ENCODE measurements at regions of chr11 and their contacts with region 1.

Region 1: DNA sequence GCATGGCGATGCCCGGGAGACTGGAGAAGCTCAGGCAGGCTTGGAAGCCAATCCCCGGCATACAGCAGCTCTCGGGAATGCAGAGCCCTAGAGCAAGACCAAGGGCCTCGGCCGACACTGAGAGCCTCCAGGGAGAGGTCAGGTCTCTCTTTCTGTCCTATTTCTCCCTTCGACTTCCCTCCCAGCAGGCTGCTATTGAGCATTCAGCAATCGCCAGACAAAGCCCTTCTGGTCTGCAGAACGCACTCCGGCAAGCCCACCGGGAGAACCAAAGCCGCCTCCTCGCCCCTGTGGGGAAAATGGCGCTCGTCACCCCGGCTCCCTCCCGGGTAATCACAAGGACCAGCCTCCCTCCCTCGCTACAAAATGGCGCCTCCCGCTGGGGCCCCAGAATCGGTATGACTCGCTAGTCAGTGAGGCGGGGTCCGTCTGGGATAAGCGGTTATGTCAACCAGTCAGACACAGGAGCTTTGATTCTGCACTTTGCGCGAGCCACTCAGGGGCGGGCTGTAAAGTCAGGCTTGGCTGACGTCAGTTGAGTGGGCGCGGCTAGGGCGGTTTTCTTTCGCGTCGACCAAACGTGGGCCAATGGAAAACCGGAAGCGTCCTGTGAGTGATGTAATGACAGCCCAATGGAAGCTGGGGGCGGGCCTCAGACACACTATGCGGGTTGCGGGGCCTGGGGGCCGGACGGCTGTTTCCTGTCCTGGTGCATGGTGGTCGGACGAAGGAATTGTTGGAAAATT is at the start of gene ZNF143:
- DNase-seq: peak; percentile 100
- H3K4me3 Mint-ChIP-seq: peak within 1 kb of the TSS; percentile 97
- H3K27ac Mint-ChIP-seq: peak within 1 kb of the TSS; percentile 98
- H3K4me1 Mint-ChIP-seq: peaks cover 23% of the 10 kb centered on the region
- H3K27me3 Mint-ChIP-seq: no peaks in the 10 kb centered on the region
- total RNA-seq, gene ZNF143: 38.6 and 39.2 TPM in 2 replicates

Region 2: GRCh38 chr11:8964324-8965320 is 495.9 kb before region 1 on chr11 and contains the start of gene TMEM9B:
- intact Hi-C with region 1: loop called (anchors 5 kb)
- DNase-seq: peak; percentile 95
- H3K4me3 Mint-ChIP-seq: peak within 1 kb of the TSS; percentile 100
- H3K27ac Mint-ChIP-seq: peak within 1 kb of the TSS; percentile 95
- H3K4me1 Mint-ChIP-seq: peaks cover 30% of the 10 kb centered on the region
- H3K27me3 Mint-ChIP-seq: no peaks in the 10 kb centered on the region
- total RNA-seq, gene TMEM9B: 25.2 and 26.5 TPM in 2 replicates

Region 3: DNA sequence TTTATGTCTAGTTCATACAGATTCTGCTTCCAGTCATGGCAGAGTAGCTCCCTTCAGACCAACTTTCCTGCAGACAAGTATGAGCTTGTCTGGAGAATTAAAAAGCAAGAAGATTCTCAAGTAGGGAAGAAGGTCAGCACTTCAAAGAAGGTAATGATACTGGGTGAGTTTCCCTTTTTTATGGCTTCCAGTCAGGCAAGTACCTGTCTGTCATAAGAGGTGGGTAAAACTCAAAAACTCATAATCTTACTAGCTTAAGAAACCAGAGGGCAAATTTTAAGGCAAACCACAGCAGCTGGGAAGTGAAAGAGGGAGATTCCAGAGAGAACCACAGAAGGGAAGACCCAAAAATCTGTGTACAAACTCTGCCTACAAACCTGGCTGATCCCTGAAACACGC is 249.6 kb before region 1 on chr11:
- intact Hi-C with region 1: loop called (anchors 5 kb)
- DNase-seq: peak; percentile 63
- H3K4me3 Mint-ChIP-seq: peak overlapping the region; percentile 53
- H3K27ac Mint-ChIP-seq: peak overlapping the region; percentile 76
- H3K4me1 Mint-ChIP-seq: peaks cover 54% of the 10 kb centered on the region
- H3K27me3 Mint-ChIP-seq: no peaks in the 10 kb centered on the region

Region 4: GRCh38 chr11:9384535-9385303 is 75.8 kb before region 1 on chr11 and contains the start of gene IPO7:
- intact Hi-C with region 1: loop called (anchors 1 kb)
- DNase-seq: peak; percentile 97
- H3K4me3 Mint-ChIP-seq: peak within 1 kb of the TSS; percentile 95
- H3K27ac Mint-ChIP-seq: peak within 1 kb of the TSS; percentile 94
- H3K4me1 Mint-ChIP-seq: peaks cover 21% of the 10 kb centered on the region
- H3K27me3 Mint-ChIP-seq: no peaks in the 10 kb centered on the region
- total RNA-seq, gene IPO7: 177 and 200 TPM in 2 replicates

Region 5: GRCh38 chr11:9479899-9480298 is 19.4 kb after region 1 on chr11:
- intact Hi-C with region 1: no loop called
- DNase-seq: no peak
- H3K4me3 Mint-ChIP-seq: no peak overlapping the region
- H3K27ac Mint-ChIP-seq: no peak overlapping the region
- H3K4me1 Mint-ChIP-seq: no peaks in the 10 kb centered on the region
- H3K27me3 Mint-ChIP-seq: no peaks in the 10 kb centered on the region

Region 6: GRCh38 chr11:9565822-9566560 is 105.5 kb after region 1 on chr11:
- intact Hi-C with region 1: loop called (anchors 2 kb)
- DNase-seq: peak; percentile 88
- H3K4me3 Mint-ChIP-seq: peak overlapping the region; percentile 52
- H3K27ac Mint-ChIP-seq: peak overlapping the region; percentile 85
- H3K4me1 Mint-ChIP-seq: peaks cover 20% of the 10 kb centered on the region
- H3K27me3 Mint-ChIP-seq: peaks cover 2% of the 10 kb centered on the region

Region 7: DNA sequence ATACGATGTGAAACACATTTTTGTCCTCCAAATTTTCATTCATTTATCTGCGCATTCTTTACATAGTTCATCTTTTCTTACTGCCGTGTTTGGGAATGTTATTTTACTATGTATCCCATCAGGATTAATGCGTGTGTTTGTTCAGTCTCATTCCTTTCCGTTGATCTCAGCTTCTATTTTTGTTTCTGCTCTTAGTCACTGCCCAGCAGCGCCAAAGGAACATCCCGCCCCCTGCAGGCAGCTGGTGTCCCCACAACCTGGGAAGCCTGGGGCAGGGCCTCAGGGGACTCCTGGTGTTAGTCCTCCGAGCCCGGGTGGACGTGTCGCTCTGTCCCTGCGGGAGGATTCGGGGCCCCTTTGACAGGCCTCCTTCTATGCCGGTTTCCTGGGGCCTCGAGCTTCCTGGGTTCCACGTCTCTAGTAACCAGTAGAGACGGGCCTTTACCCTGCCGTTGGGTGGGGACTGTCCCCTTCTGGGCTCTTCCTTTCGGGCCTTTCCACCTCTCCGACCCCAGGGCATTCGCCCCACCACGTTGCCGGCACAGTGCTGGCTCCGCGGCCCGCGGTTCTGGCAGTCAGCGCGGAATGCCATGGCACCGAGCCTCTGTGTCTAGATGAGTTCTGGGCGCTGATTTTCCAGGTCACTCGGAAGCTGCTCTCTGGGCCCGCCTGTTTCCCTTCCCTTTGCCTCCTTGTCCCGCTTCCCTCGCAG is 152.8 kb after region 1 on chr11:
- intact Hi-C with region 1: loop called (anchors 2 kb)
- DNase-seq: peak; percentile 96
- H3K4me3 Mint-ChIP-seq: peak overlapping the region; percentile 90
- H3K27ac Mint-ChIP-seq: peak overlapping the region; percentile 98
- H3K4me1 Mint-ChIP-seq: peaks cover 35% of the 10 kb centered on the region
- H3K27me3 Mint-ChIP-seq: no peaks in the 10 kb centered on the region

Region 8: GRCh38 chr11:10857709-10858438 is 1397.4 kb after region 1 on chr11 and contains the start of gene ZBED5:
- intact Hi-C with region 1: loop called (anchors 5 kb)
- DNase-seq: peak; percentile 99
- H3K4me3 Mint-ChIP-seq: peak within 1 kb of the TSS; percentile 100
- H3K27ac Mint-ChIP-seq: peak within 1 kb of the TSS; percentile 100
- H3K4me1 Mint-ChIP-seq: peaks cover 35% of the 10 kb centered on the region
- H3K27me3 Mint-ChIP-seq: no peaks in the 10 kb centered on the region
- total RNA-seq, gene ZBED5: 41.8 and 43.1 TPM in 2 replicates